ENCODE measurements at regions of chr10 and their contacts with region 1.

Region 1: DNA sequence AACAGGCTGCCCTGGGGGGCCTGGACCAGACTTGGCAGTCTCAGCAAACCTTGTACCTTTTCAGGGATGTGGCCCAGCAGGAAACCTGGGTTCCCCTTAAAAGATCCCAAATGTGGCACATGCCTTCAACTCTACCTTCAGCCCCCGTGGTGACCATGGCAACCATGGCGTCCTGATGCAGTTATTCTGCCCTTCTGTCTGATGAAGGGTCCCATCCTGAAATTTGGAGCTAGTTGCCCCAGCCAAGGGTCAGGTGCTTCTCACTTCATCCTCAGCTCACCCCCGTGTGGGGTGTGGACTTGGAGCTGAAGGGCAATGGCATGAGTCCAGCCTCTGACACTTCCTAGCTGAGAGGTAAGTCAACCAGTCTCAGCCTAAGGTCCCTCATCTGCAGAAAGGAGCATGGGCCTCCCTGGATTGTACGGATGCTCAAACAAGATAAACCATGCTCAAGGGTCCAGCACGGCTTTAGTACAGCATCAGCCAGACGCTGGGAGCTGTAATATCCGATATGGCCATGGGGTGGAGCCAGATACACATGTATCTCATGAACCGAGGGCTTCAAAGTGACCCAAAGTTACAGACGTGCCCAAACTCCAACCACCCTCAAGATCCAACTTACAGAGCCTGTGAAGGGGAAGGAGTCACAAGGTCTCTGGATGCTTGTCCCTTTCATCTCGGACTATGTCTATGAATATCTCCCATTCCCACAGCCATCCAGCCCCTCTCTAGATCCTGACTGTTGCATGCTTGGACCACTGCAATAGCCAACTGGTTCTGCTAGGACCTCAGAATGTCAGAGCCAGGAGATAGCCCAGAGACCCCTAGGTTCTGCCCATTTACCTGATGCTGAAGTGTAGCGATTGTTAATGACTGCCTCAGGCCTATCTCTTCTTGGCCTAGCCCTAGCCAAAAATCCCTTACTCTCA is 142.5 kb downstream of the SH3PXD2A start:
- DNase-seq: no peak
- ATAC-seq: peak; percentile 94
- H3K4me3 ChIP-seq: no peak overlapping the region
- H3K27ac ChIP-seq: no peak overlapping the region
- H3K4me1 ChIP-seq: no peaks in the 10 kb centered on the region
- H3K27me3 ChIP-seq: no peaks in the 10 kb centered on the region
- CTCF ChIP-seq: peak; percentile 79 to 92 (median 86)
- EP300 ChIP-seq: no peak
- POLR2A ChIP-seq: no peak
- RAD21 ChIP-seq: peak; percentile 94

Region 2: GRCh38 chr10:103696411-103697145 is 16.3 kb before region 1 on chr10:
- CTCF ChIA-PET with region 1: interaction called, 12 read pairs
- POLR2A ChIA-PET with region 1: no interaction called
- RAD21 ChIA-PET with region 1: interaction called, 4 read pairs
- SMC1A ChIA-PET with region 1: interaction called, 3 read pairs
- in situ Hi-C with region 1: no loop called
- intact Hi-C with region 1: no loop called
- DNase-seq: no peak
- ATAC-seq: peak; percentile 61
- H3K4me3 ChIP-seq: no peak overlapping the region
- H3K27ac ChIP-seq: peak overlapping the region; percentile 54
- H3K4me1 ChIP-seq: peaks cover 29% of the 10 kb centered on the region
- H3K27me3 ChIP-seq: no peaks in the 10 kb centered on the region
- CTCF ChIP-seq: peak; percentile 33 to 50 (median 44); a peak in 5 of 6 replicates
- EP300 ChIP-seq: no peak
- POLR2A ChIP-seq: peak; percentile 55; the same call in 1 of the 2 replicates
- RAD21 ChIP-seq: no peak

Region 3: DNA sequence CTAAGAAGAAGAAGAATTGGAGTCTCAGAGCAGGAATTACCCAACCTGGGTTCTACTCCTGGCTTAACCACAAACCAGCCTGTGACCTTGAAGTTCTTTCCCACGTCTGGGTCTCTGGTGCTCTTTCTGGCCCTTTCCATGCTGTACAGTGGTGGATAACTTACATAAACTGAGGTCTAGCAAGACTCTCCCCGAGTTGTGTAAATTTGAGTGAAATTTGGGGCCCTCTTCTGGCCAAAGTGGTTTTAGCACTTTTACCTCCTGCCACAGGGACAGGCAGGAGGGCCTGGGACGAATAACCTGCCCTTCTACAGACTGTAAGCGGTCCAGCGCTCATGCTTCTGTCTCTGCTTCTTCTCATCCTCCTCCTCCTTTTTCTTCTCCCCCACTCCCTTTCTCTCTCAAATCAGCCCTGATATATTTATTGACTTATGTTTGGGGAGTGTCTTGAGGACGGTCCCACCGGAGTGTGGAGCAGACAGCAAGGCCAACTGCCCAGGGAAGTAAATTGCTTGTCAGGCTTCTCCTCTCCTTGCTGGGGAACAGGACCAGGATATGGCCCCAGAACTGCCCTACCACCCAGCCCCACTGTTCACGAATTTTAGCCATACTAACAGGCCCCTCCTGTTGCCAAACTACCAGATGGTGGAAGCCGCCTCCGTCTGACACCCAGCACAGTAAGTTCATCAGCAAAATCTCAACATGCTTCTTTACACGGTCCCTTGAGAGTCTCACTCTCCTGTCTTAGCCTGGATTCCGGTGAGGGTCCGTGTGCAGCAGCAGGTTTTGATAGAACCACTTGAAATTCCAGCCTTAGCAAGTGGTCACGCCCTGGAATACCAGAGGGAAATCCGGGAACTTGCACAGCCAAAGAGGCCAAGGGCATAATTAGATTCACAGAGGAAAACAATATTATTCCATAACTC is 146.6 kb after region 1 on chr10:
- CTCF ChIA-PET with region 1: interaction called, 45 read pairs
- POLR2A ChIA-PET with region 1: no interaction called
- RAD21 ChIA-PET with region 1: interaction called, 19 read pairs
- SMC1A ChIA-PET with region 1: interaction called, 50 read pairs
- in situ Hi-C with region 1: loop called (anchors 5 kb)
- intact Hi-C with region 1: loop called (anchors 1 kb)
- DNase-seq: peak; percentile 24
- ATAC-seq: peak; percentile 97
- H3K4me3 ChIP-seq: no peak overlapping the region
- H3K27ac ChIP-seq: no peak overlapping the region
- H3K4me1 ChIP-seq: no peaks in the 10 kb centered on the region; the same call in 1 of the 2 replicates
- H3K27me3 ChIP-seq: peaks cover 6 to 9% of the 10 kb centered on the region in 2 experiments
- CTCF ChIP-seq: peak; percentile 54 to 71 (median 63); a peak in 5 of 6 replicates
- EP300 ChIP-seq: no peak
- POLR2A ChIP-seq: no peak
- RAD21 ChIP-seq: peak; percentile 68

Region 4: DNA sequence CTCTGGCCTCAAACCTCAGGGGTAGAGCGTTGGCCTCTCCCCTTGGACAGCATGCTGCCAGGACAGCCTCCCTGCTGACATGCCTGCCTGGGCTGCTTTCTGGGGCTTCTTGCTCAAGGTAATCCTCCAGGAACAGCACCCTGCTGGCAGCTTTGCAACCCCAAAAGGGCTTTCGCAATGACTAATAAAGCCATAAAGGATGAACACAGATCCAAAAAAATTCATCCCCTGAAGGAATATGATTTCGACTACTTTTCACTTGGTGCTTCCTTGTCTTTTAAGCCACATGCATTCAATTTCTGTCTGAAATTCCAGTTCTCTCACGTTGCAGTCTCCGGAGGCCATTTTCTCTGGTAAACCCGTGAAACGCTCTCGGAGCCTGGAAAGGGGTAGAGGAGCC is 157.7 kb after region 1 on chr10:
- CTCF ChIA-PET with region 1: interaction called, 22 read pairs
- POLR2A ChIA-PET with region 1: no interaction called
- RAD21 ChIA-PET with region 1: interaction called, 6 read pairs
- SMC1A ChIA-PET with region 1: interaction called, 4 read pairs
- in situ Hi-C with region 1: no loop called
- intact Hi-C with region 1: no loop called
- DNase-seq: no peak
- ATAC-seq: no peak
- H3K4me3 ChIP-seq: no peak overlapping the region
- H3K27ac ChIP-seq: no peak overlapping the region
- H3K4me1 ChIP-seq: no peaks in the 10 kb centered on the region
- H3K27me3 ChIP-seq: no peaks in the 10 kb centered on the region
- CTCF ChIP-seq: no peak
- EP300 ChIP-seq: no peak
- POLR2A ChIP-seq: no peak
- RAD21 ChIP-seq: no peak

Region 5: DNA sequence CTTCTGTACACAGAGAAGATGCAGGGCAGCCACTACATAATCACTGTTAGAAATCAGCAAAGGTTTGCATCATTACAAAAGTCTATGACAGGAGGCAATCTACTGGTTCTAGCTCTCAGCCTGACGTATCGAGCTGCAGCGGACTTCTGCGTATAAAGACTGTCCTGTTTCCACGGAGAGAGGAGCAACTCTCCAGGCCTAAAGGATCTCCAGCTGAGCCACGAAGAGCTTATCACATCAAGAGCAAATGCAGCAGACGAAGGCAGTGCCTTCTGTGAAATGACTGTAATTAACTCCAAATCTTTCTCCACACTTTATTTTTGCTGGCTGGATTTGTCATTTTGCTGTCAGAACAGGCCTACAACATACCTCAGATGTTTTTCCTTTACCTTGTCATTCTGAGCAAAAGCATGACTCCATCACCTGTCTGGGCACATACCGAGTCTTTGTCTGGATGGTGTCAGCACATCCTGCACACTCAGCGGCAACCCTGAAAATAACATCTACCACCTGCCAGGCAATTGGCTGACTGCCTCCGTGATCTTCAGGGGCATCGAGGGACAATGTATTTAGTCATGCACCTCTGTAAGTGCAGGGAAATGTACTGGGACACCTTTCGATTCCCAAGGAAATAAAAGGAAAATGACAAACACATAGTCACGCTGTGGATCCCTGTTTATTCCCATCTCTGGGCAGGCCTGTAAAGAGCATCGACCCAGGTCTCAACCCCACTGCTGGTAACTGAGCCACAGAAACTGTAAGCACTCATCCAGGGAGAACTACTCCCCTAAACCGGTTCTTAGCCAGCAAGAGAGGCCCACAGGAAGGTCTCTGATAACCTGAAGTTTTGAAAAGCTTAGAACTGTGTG is 168.8 kb after region 1 on chr10:
- CTCF ChIA-PET with region 1: interaction called, 120 read pairs
- POLR2A ChIA-PET with region 1: no interaction called
- RAD21 ChIA-PET with region 1: interaction called, 45 read pairs
- SMC1A ChIA-PET with region 1: interaction called, 32 read pairs
- in situ Hi-C with region 1: no loop called
- intact Hi-C with region 1: loop called (anchors 1 kb)
- DNase-seq: no peak
- ATAC-seq: no peak
- H3K4me3 ChIP-seq: no peak overlapping the region
- H3K27ac ChIP-seq: no peak overlapping the region
- H3K4me1 ChIP-seq: no peaks in the 10 kb centered on the region
- H3K27me3 ChIP-seq: no peaks in the 10 kb centered on the region
- CTCF ChIP-seq: no peak
- EP300 ChIP-seq: no peak
- POLR2A ChIP-seq: no peak
- RAD21 ChIP-seq: no peak

Region 6: DNA sequence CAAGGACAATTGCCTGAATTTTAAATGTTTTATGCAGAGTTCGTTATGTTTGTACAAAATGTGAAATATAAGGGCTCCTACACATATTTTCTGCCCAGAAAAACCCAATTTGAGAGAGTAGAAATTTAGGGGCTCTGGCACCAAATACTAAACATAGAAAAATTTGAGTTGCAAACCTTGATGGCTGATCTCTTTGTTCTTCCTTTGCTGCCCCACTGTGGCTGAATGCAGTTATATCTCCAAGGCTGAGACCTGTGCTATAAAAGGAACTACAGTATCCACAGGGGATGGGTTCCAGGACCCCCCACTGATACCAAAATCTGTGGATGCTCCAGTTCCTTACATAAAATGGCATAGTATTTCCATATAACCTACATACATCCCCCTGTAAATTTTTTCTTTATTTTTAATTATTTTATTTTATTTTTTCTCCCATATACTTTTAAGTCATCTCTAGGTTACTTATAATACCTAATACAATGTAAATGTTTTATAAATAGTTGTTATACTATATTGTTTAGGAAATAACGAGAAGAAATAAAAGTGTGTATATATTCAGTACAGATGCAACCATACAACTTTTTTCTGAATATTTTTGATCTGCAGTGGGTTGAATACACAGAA is 496.9 kb after region 1 on chr10:
- CTCF ChIA-PET with region 1: interaction called, 8 read pairs
- POLR2A ChIA-PET with region 1: no interaction called
- RAD21 ChIA-PET with region 1: no interaction called
- SMC1A ChIA-PET with region 1: no interaction called
- in situ Hi-C with region 1: loop called (anchors 10 kb)
- intact Hi-C with region 1: loop called (anchors 5 kb)
- DNase-seq: no peak
- ATAC-seq: peak; percentile 82
- H3K4me3 ChIP-seq: no peak overlapping the region
- H3K27ac ChIP-seq: no peak overlapping the region
- H3K4me1 ChIP-seq: no peaks in the 10 kb centered on the region
- H3K27me3 ChIP-seq: no peaks in the 10 kb centered on the region; a peak in 3 of 4 replicates
- CTCF ChIP-seq: peak; percentile 48 to 58 (median 51); a peak in 5 of 6 replicates
- EP300 ChIP-seq: no peak
- POLR2A ChIP-seq: no peak
- RAD21 ChIP-seq: peak; percentile 63

Measured in GM12878 (cell line).